ENCODE measurements at regions of chr21 and their contacts with region 1.

Region 1: DNA sequence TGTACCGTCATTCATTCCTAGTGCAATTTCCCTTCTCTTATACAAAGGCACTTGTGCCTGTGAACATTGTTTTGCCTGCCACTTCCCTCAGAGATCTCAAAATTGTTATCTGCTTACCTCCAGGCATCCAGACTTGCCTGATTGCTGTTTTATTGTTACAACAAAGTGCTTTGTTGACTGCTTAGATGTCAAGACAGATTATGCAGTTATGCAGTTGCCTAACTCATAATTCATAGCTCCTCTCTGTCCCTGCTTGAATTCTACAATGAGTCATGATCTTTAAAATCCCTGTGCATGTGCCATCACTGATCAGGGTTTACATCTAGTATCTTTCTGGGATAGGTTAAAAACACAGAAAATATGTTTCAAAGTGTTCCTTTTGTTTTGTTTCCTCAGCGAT is 24.5 kb downstream of the CXADR start:
- DNase-seq: peak; percentile 34
- H3K4me3 ChIP-seq: no peak overlapping the region
- H3K27ac ChIP-seq: peak overlapping the region in 1 of 2 experiments; percentile 57; a peak in 1 of 4 replicates
- H3K4me1 ChIP-seq: peaks cover 0 to 9% of the 10 kb centered on the region in 2 experiments; a peak in 2 of 4 replicates
- H3K27me3 ChIP-seq: no peaks in the 10 kb centered on the region; the same call in 1 of the 2 replicates
- CTCF ChIP-seq: no peak
- EP300 ChIP-seq: peak in 1 of 2 experiments; percentile 68; a peak in 1 of 4 replicates
- RAD21 ChIP-seq: no peak

Region 2: DNA sequence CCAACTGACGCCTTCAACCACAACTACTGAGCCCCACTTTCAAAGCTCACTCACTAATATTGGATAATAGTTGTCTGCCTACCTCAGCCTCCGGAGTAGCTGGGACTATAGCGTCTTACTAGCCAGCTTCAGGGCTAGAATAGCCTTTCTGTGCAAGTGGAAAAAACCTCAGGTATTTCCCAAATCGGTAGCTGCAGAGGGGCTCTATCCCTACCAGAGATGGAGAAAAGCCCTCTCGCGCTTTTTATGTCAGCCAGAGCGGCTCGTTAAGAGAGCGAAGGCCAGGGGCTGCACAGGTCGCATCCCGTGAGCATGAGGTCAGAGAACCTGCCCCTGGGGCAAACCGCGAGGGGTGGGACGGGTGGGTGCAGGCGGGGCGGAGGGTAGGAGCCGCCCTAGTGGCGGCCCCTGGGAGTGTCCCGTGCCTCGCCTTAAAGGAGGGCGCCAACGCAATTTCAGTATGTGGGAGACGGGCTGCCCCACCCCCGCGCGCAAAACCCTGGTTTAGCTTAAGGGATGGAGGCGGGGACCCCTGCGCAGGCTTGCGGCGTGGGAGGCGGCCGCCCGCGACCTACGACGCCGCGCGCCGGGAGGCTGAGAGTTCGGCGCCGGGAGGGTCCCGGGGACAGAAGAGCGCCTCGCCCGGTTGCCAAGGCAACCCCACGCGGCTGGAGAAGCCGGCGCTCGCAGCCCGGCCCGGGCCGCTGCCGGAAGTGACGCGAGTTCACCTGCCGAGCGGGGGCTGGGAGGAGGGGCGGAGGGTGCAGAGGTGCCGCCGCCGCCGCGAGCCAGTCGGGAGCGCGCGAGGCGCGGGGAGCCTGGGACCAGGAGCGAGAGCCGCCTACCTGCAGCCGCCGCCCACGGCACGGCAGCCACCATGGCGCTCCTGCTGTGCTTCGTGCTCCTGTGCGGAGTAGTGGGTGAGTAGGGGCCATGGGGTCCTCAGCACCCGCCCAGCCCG is 24.8 kb before region 1 on chr21 and contains the start of gene CXADR:
- CTCF ChIA-PET with region 1: interaction called, 13 read pairs
- POLR2A ChIA-PET with region 1: no interaction called
- DNase-seq: peak; percentile 93
- H3K4me3 ChIP-seq: peak within 1 kb of the TSS; percentile 58 to 65
- H3K27ac ChIP-seq: peak within 1 kb of the TSS in 1 of 2 experiments; percentile 40; a peak in 1 of 4 replicates
- H3K4me1 ChIP-seq: peaks cover 0 to 7% of the 10 kb centered on the region in 2 experiments; a peak in 2 of 4 replicates
- H3K27me3 ChIP-seq: 0 out of 2 replicates have a peak, but pooled peaks cover 7% of the 10 kb centered on the region
- CTCF ChIP-seq: peak; percentile 32
- EP300 ChIP-seq: no peak
- RAD21 ChIP-seq: no peak
- polyA plus RNA-seq, gene CXADR: 1.1 and 2.0 TPM in 2 replicates

Region 3: GRCh38 chr21:17631195-17631594 is 93.9 kb after region 1 on chr21:
- CTCF ChIA-PET with region 1: no interaction called
- POLR2A ChIA-PET with region 1: no interaction called
- DNase-seq: no peak
- H3K4me3 ChIP-seq: no peak overlapping the region
- H3K27ac ChIP-seq: no peak overlapping the region
- H3K4me1 ChIP-seq: no peaks in the 10 kb centered on the region
- H3K27me3 ChIP-seq: no peaks in the 10 kb centered on the region
- CTCF ChIP-seq: no peak
- EP300 ChIP-seq: no peak
- RAD21 ChIP-seq: no peak